ENCODE measurements at regions of chr6 and their contacts with region 1.

Region 1: GRCh38 chr6:13908955-13909381 is 15.8 kb upstream of the RNF182 start:
- DNase-seq: peak; percentile 40
- ATAC-seq: peak; percentile 94
- H3K4me3 Mint-ChIP-seq: no peak overlapping the region
- H3K27ac Mint-ChIP-seq: no peak overlapping the region
- H3K4me1 Mint-ChIP-seq: peaks cover 3% of the 10 kb centered on the region
- H3K27me3 Mint-ChIP-seq: peaks cover 3% of the 10 kb centered on the region
- CTCF ChIP-seq: peak; percentile 47

Region 2: GRCh38 chr6:13873285-13874190 is 35.4 kb before region 1 on chr6:
- CTCF ChIA-PET with region 1: interaction called, 14 read pairs
- POLR2A ChIA-PET with region 1: no interaction called
- DNase-seq: peak; percentile 93
- ATAC-seq: peak; percentile 90
- H3K4me3 Mint-ChIP-seq: peak overlapping the region; percentile 66
- H3K27ac Mint-ChIP-seq: no peak overlapping the region; the same call in 1 of the 2 replicates
- H3K4me1 Mint-ChIP-seq: peaks cover 21% of the 10 kb centered on the region
- H3K27me3 Mint-ChIP-seq: peaks cover 27% of the 10 kb centered on the region
- CTCF ChIP-seq: peak; percentile 38; the same call in 1 of the 2 replicates

Region 3: GRCh38 chr6:14002176-14002947 is 93.4 kb after region 1 on chr6:
- CTCF ChIA-PET with region 1: interaction called, 13 read pairs
- POLR2A ChIA-PET with region 1: no interaction called
- DNase-seq: peak; percentile 56
- ATAC-seq: peak; percentile 82
- H3K4me3 Mint-ChIP-seq: no peak overlapping the region
- H3K27ac Mint-ChIP-seq: no peak overlapping the region
- H3K4me1 Mint-ChIP-seq: peaks cover 19% of the 10 kb centered on the region
- H3K27me3 Mint-ChIP-seq: no peaks in the 10 kb centered on the region
- CTCF ChIP-seq: no peak

Region 4: GRCh38 chr6:14037402-14038277 is 128.7 kb after region 1 on chr6:
- CTCF ChIA-PET with region 1: interaction called, 28 read pairs
- POLR2A ChIA-PET with region 1: no interaction called
- DNase-seq: no peak
- ATAC-seq: no peak
- H3K4me3 Mint-ChIP-seq: no peak overlapping the region
- H3K27ac Mint-ChIP-seq: no peak overlapping the region
- H3K4me1 Mint-ChIP-seq: peaks cover 15% of the 10 kb centered on the region
- H3K27me3 Mint-ChIP-seq: peaks cover 7% of the 10 kb centered on the region
- CTCF ChIP-seq: no peak

Region 5: GRCh38 chr6:14055541-14055940 is 146.6 kb after region 1 on chr6:
- CTCF ChIA-PET with region 1: interaction called, 22 read pairs
- POLR2A ChIA-PET with region 1: no interaction called
- DNase-seq: no peak
- ATAC-seq: peak; percentile 90
- H3K4me3 Mint-ChIP-seq: no peak overlapping the region
- H3K27ac Mint-ChIP-seq: no peak overlapping the region
- H3K4me1 Mint-ChIP-seq: peaks cover 6% of the 10 kb centered on the region
- H3K27me3 Mint-ChIP-seq: peaks cover 56% of the 10 kb centered on the region
- CTCF ChIP-seq: no peak

Region 6: GRCh38 chr6:14082771-14083170 is 173.8 kb after region 1 on chr6:
- CTCF ChIA-PET with region 1: interaction called, 10 read pairs
- POLR2A ChIA-PET with region 1: no interaction called
- DNase-seq: no peak
- ATAC-seq: peak; percentile 95
- H3K4me3 Mint-ChIP-seq: no peak overlapping the region
- H3K27ac Mint-ChIP-seq: no peak overlapping the region
- H3K4me1 Mint-ChIP-seq: peaks cover 14% of the 10 kb centered on the region
- H3K27me3 Mint-ChIP-seq: no peaks in the 10 kb centered on the region; the same call in 1 of the 2 replicates
- CTCF ChIP-seq: no peak